Vagina (tissue), 2 donors: ENCODE measurements at regions of chr20 and their contacts with region 1.

Region 1: GRCh38 chr20:48657475-48658470 is 170.0 kb downstream of the PREX1 start:
- DNase-seq: no peak
- H3K4me3 ChIP-seq: no peak overlapping the region
- H3K27ac ChIP-seq: no peak overlapping the region
- H3K4me1 ChIP-seq: no peaks in the 10 kb centered on the region
- H3K27me3 ChIP-seq: no peaks in the 10 kb centered on the region
- CTCF ChIP-seq: peak; percentile 82 to 95 (median 90)
- POLR2A ChIP-seq: no peak

Region 2: DNA sequence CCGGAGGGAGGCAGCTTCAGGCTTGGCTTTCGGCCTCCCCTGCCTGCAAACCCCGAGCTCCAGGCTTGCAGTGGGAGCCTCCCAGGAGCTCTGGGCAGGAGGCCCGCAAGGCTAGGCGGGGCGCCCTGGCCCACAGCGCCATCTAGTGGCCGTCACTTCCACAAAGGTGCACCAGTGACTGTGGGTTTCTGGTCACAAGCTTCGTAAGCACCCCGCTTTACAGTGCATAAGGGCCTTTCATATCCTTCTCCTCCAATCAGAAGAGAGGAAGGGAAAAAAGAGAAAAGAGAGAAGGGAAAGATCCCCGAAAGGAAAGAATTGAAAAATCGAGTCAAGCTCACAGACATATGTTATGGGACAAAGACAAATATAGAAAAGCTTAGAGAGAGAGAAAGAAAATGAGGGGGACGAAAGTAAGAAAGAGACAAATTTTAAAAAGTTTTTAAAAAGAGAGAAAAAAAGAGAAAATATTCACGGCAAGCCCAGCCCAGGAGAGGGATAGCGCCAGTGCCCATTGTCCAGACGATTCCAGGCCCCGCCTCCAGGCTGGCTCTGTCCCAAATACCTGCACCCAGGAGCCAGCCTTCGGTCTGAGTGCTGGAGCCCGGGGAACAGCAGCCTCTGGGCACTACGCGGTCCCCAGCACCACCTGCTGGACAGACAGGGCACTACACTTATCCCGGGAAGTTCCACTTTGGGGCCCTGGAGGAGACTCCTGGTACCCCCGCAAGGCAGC is 37.1 kb before region 1 on chr20:
- intact Hi-C with region 1: no loop called
- DNase-seq: no peak
- H3K4me3 ChIP-seq: peak overlapping the region; percentile 2 to 17
- H3K27ac ChIP-seq: no peak overlapping the region
- H3K4me1 ChIP-seq: peaks cover 13% of the 10 kb centered on the region
- H3K27me3 ChIP-seq: no peaks in the 10 kb centered on the region
- CTCF ChIP-seq: peak; percentile 75 to 99 (median 89)
- POLR2A ChIP-seq: no peak

Region 3: GRCh38 chr20:48904365-48905296 is 246.9 kb after region 1 on chr20:
- intact Hi-C with region 1: loop called (anchors 2 kb)
- DNase-seq: no peak
- H3K4me3 ChIP-seq: no peak overlapping the region
- H3K27ac ChIP-seq: no peak overlapping the region
- H3K4me1 ChIP-seq: no peaks in the 10 kb centered on the region
- H3K27me3 ChIP-seq: no peaks in the 10 kb centered on the region
- CTCF ChIP-seq: peak; percentile 63 to 83 (median 83)
- POLR2A ChIP-seq: no peak

Region 4: DNA sequence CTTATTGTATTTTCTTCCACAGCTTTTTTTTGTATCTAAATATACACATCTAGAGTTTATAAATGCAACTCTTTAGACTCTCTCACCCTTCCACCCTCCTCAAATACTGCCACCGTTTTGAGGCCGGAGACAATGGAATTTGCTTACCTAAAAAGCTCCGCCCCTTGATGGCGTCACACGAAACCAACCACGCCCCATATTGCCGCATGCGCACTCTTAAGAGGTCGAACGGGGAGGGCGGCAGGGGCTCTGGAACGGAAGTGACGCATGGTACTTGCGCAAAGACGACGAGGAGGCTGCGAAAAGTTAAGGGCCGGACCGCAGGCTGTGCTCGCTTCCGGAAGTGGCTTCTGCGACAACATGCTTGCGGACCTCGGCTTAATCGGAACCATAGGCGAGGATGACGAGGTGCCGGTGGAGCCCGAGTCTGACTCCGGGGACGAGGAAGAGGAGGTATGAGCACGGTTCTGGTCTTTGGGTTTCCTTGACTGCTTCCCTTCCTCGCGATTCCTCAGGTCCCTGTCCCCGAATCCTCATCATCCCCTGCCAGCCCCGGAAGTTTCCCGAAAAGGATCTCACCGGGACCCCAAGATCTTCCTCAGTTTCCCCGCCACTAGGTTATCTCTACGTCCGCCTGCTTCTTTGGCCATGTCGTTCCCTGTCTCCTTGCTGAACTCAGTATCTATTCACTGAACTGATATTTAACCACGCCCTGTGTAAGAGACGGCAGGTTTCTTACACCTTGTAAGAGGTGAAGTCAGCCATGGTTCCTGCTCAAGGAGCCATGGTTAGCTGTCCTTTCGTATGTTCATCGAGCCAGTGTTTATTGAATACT is 561.5 kb after region 1 on chr20 and contains the start of gene DDX27:
- intact Hi-C with region 1: loop called (anchors 10 kb)
- DNase-seq: peak; percentile 98 to 99
- H3K4me3 ChIP-seq: peak within 1 kb of the TSS; percentile 76 to 78
- H3K27ac ChIP-seq: peak within 1 kb of the TSS; percentile 82
- H3K4me1 ChIP-seq: peaks cover 27% of the 10 kb centered on the region
- H3K27me3 ChIP-seq: no peaks in the 10 kb centered on the region
- CTCF ChIP-seq: no peak
- POLR2A ChIP-seq: peak; percentile 49 to 86
- total RNA-seq, gene DDX27: 23.3 TPM